Mammary epithelial cell (primary cell): ENCODE measurements at regions of chr18 and their contacts with region 1.

Region 1: DNA sequence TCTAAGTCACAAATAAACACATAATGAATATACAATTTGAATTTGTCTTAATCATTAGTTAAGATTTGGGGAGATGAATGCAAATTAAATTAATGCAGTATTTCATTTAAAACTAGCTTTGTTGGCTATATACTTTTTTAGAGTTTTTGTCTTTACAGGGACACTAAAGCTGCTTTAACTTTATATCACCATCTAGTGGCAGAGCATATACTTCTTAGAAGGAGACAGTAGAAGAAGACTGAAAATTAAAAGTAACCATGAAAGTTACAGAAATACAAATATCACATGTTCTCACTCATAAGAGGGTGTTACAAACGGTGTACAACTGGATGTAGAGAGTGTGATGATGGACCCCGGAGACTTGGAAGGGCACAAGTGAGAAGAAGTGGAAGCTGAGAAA is 268.3 kb upstream of the NETO1 start:
- DNase-seq: peak; percentile 11
- H3K4me3 ChIP-seq: no peak overlapping the region
- H3K27ac ChIP-seq: no peak overlapping the region
- H3K4me1 ChIP-seq: no peaks in the 10 kb centered on the region
- H3K27me3 ChIP-seq: no peaks in the 10 kb centered on the region
- CTCF ChIP-seq: peak; percentile 45 to 64

Region 2: GRCh38 chr18:72700961-72701718 is 435.0 kb before region 1 on chr18:
- CTCF ChIA-PET with region 1: no interaction called
- dilution Hi-C with region 1: no loop called
- in situ Hi-C with region 1: no loop called
- intact Hi-C with region 1: loop called (anchors 5 kb)
- DNase-seq: peak; percentile 14
- H3K4me3 ChIP-seq: no peak overlapping the region
- H3K27ac ChIP-seq: no peak overlapping the region
- H3K4me1 ChIP-seq: no peaks in the 10 kb centered on the region
- H3K27me3 ChIP-seq: peaks cover 3% of the 10 kb centered on the region
- CTCF ChIP-seq: peak; percentile 47 to 53

Region 3: DNA sequence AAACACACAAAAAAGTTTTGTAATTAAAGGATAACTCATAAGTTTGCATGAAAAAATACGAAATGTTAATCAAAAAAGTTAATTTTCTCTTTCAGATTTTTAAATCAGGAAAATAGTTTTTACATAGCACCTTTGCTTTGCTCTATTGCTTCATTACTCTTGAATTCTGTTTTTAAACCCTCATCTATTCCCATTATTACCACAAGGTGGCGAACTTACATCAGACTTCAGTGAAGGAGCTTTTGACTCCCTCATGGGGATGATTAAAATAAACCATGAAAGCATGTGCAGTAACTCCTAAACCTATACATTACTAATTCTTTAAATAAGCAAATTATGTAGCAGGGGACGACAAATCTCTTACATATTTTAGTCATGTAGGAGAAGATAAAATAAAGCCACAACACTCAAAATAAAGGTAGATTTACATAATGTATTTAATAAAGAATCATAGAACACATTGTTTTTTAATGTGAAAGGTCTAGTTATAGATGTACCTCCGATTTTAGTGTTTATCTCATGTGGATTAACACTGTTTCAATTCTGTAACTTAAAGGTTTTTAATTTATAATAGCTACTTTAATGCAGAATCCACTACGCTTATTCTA is 373.5 kb before region 1 on chr18:
- CTCF ChIA-PET with region 1: no interaction called
- dilution Hi-C with region 1: no loop called
- in situ Hi-C with region 1: loop called (anchors 10 to 25 kb)
- intact Hi-C with region 1: loop called (anchors 1 kb)
- DNase-seq: peak; percentile 61
- H3K4me3 ChIP-seq: no peak overlapping the region
- H3K27ac ChIP-seq: no peak overlapping the region
- H3K4me1 ChIP-seq: no peaks in the 10 kb centered on the region
- H3K27me3 ChIP-seq: no peaks in the 10 kb centered on the region
- CTCF ChIP-seq: peak; percentile 52 to 67

Region 4: GRCh38 chr18:72819050-72819449 is 317.1 kb before region 1 on chr18:
- CTCF ChIA-PET with region 1: interaction called, 4 read pairs
- dilution Hi-C with region 1: no loop called
- in situ Hi-C with region 1: no loop called
- intact Hi-C with region 1: loop called (anchors 5 kb)
- DNase-seq: no peak
- H3K4me3 ChIP-seq: no peak overlapping the region
- H3K27ac ChIP-seq: no peak overlapping the region
- H3K4me1 ChIP-seq: peaks cover 3% of the 10 kb centered on the region
- H3K27me3 ChIP-seq: no peaks in the 10 kb centered on the region
- CTCF ChIP-seq: peak in 1 of 2 donors; percentile 8